Dendritic cell treated with granulocyte-macrophage colony-stimulating factor and Interleukin-4, amounts not matched to agents 40 ng/mL and 50 ng/mL, for 4 days (primary cell): ENCODE measurements at regions of chr4 and their contacts with region 1.

Region 1: DNA sequence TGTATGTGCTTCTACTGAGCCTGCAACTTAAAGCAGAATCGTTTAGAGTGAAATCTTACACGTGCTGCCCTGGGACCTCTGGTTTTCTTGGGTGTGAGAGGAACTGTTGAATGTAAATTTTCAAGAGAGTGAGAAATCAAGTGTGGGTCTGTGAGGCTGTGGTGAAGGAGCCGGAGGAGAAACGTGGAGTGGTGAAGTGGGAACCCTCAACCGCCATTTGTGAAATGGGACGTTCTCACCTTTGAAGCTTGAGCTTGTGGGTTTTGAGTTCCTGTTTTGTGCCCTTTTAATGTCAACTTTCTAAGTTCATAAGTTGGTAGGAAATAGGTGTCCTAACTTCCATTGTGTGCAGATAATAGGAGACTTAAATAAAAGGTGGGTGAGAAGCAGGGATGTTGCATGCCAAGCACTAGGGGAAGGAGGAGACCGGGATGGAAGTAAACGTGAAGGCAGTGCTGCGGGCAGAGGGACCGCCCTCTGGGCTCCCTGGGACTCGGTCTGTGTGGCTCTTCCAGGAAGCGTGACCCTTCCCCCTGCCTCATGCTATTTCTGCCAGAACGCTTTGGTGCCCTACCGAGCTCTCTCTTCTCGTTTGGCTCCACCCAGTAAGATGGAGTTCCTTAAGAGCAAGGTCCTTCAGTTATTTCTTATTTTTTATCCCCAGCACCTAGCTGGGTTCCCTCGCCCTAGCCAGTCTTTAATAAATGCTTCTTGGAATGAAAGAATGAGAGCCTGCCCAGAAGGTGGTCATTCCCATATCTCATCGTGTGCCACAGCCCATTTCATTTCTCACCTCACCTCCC is 56.0 kb downstream of the TMEM131L start:
- H3K4me3 Mint-ChIP-seq: no peak overlapping the region
- H3K27ac Mint-ChIP-seq: peak overlapping the region; percentile 70
- H3K4me1 Mint-ChIP-seq: peaks cover 82% of the 10 kb centered on the region
- H3K27me3 Mint-ChIP-seq: no peaks in the 10 kb centered on the region

Region 2: DNA sequence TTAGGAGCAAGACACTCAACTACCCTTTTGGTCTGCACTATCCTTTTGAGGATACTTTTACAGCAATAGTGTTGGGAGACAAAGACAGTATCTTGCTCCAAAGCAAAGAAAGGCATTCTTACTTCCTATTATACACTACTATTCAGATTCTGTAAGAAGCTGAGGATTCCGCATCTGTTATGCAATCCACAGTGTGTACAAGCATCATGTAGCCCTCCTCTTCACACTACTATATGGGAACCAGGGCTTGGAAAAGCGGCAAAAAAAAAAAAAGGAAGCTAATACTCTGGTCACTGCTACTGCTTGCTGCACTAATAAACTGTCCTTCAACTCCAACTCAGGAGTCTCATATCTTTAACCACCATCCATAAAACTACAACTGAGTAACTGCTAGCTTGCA is 1045.4 kb before region 1 on chr4:
- intact Hi-C with region 1: no loop called
- H3K4me3 Mint-ChIP-seq: no peak overlapping the region
- H3K27ac Mint-ChIP-seq: no peak overlapping the region
- H3K4me1 Mint-ChIP-seq: peaks cover 27% of the 10 kb centered on the region
- H3K27me3 Mint-ChIP-seq: no peaks in the 10 kb centered on the region

Region 3: DNA sequence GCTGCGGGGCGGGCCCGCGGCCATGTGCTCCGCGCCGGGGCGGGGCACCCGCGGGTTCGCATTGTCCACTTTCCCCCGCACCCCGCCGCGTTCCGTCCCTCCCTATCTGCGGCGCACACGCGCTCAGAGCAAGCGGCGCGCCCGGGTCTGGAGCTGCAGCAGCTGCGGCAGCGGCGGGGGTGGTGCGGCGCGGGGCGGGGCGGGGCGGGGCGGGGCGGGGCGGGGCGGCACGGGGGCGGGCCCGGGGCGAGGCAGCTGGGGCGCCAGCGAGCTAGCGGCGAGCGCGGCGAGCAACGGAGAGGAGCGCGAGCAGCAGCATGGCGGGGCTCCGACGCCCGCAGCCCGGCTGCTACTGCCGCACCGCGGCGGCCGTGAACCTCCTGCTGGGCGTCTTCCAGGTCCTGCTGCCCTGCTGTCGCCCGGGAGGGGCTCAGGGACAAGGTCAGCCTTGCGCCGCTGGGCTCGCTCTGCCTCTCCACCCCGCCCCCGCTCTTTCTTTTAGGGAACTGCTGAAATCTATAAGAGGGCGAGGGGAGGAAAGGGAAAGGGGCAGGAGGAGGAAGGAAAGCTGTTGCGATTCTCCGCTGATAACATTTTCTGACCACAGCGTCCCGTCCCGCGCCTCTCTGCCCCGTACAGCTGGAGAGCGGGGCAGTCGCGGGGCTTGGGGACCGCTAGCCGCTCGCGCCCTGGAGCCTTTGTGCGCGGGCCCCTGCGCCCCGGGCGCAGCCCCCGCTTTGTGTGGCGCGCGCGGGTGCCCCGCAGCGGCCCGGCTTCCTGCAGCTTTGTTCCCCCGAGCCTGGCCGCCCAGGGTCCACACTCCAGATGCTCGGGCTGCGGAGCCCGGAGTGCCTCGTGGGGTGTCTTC is 55.9 kb before region 1 on chr4 and contains the start of gene TMEM131L:
- intact Hi-C with region 1: loop called (anchors 5 kb)
- H3K4me3 Mint-ChIP-seq: peak within 1 kb of the TSS; percentile 91
- H3K27ac Mint-ChIP-seq: peak within 1 kb of the TSS; percentile 79
- H3K4me1 Mint-ChIP-seq: peaks cover 42% of the 10 kb centered on the region
- H3K27me3 Mint-ChIP-seq: peaks cover 12% of the 10 kb centered on the region

Region 4: DNA sequence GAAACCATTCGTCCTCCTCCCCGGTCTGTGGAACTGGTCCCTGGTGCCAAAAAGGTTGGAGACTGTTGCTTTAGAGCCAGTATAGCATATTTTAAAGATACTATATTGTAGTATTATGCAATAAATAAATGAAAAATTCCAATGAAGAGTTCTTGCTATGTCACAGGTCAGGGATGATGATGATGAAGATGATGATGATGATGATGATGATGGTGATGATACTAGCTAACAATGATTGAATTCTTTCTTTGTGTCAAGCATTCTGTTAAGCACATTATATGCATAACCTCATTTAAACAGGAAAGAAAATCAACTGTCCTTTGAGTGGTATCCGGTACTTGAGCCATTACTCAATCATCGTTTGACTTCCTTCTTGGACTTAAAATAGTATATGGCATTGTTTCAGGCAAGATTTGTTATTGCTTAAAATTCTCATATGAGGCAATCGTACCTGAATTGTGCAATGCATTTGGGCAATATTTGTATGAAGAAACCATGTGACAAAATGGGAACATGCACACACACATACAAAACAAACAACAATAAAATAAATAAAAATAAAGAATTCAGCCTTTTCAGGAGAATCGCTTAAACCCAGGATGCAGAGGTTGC is 139.1 kb after region 1 on chr4:
- intact Hi-C with region 1: no loop called
- H3K4me3 Mint-ChIP-seq: no peak overlapping the region
- H3K27ac Mint-ChIP-seq: peak overlapping the region; percentile 55
- H3K4me1 Mint-ChIP-seq: peaks cover 56% of the 10 kb centered on the region
- H3K27me3 Mint-ChIP-seq: no peaks in the 10 kb centered on the region

Region 5: GRCh38 chr4:153987291-153987690 is 465.1 kb after region 1 on chr4:
- intact Hi-C with region 1: no loop called
- H3K4me3 Mint-ChIP-seq: no peak overlapping the region
- H3K27ac Mint-ChIP-seq: no peak overlapping the region
- H3K4me1 Mint-ChIP-seq: no peaks in the 10 kb centered on the region
- H3K27me3 Mint-ChIP-seq: no peaks in the 10 kb centered on the region

Region 6: GRCh38 chr4:154044108-154044531 is 521.9 kb after region 1 on chr4:
- intact Hi-C with region 1: no loop called
- H3K4me3 Mint-ChIP-seq: no peak overlapping the region
- H3K27ac Mint-ChIP-seq: no peak overlapping the region
- H3K4me1 Mint-ChIP-seq: no peaks in the 10 kb centered on the region
- H3K27me3 Mint-ChIP-seq: no peaks in the 10 kb centered on the region